Sciatic nerve (tissue), 2 donors: ENCODE measurements at regions of chr5 and their contacts with region 1.

Region 1: DNA sequence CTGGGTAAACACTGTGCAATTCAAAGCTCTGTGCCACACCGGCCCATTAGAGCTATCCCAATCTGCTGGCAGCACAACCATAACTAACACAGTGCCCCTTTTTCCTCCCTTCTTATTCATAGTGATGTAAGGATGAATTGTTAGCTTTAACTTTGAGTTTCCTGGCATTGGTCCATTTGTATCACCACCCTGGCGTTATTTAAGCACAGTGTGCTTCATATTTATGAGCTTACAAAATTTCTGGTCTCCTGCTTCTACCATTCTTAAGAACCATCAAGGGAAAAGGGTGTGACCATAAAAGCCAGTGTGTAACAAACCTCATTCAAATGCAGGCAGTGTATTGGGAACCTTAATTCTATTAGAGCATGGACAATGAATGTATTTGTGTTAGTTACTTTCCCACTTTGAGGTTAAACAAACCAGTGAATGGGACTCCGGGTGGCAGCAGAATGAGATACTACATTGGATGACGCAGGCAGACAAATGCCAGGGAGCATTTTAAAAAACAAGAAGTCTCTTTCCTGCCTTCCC is 222.6 kb downstream of the TMEM161B start:
- DNase-seq: no peak
- ATAC-seq: no peak

Region 2: DNA sequence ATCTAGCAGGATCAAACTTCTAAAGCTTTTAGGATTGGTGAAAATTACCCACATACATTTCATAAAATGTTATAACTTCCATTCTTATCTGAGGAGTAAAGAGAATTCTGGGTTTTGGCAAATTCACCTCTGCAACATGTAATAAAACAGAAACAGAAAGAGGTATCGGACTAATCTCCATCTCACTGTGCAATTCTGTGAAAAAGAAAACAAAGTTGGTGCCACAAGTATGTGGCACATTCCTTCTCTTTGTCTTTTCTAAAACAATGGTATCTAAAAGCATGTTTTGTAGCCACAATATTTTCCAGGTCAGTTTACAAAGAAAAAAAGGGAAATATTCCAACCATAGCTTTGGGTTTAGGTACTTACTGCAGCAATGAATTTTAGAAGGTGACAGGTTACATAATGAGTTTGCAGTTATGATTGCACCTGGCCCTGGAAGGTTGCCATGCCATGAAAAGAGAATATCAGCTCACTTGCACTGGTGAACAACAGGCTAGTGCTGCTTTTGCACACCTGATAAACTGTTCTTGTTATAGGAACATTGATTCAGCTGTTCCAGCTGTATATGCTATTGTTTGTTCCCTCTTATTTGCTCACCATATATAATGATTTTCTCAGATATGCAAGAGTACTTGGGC is 1328.3 kb after region 1 on chr5:
- intact Hi-C with region 1: no loop called
- DNase-seq: no peak
- ATAC-seq: no peak

Region 3: DNA sequence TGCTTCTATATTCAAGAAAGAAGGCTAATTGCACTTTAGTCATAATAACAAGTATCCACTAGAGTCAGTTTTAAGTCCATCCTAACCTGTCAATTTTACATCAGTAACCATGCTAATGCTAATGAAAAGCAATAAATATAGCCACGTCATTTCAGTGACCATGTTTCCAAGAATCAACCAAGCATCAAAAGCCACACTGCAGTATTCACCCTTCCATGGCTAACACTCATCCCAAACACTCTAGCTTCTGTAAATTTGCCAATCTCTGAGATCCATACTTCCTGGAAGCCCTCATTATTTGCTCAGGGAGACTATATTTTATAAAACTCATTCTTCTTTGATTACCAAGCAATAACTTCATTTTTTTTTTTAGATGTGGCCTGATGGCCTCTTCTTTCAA is 1651.6 kb after region 1 on chr5:
- intact Hi-C with region 1: loop called (anchors 10 kb)
- DNase-seq: no peak
- ATAC-seq: no peak